IMR-90 (cell line): ENCODE measurements at regions of chr20 and their contacts with region 1.

Region 1: DNA sequence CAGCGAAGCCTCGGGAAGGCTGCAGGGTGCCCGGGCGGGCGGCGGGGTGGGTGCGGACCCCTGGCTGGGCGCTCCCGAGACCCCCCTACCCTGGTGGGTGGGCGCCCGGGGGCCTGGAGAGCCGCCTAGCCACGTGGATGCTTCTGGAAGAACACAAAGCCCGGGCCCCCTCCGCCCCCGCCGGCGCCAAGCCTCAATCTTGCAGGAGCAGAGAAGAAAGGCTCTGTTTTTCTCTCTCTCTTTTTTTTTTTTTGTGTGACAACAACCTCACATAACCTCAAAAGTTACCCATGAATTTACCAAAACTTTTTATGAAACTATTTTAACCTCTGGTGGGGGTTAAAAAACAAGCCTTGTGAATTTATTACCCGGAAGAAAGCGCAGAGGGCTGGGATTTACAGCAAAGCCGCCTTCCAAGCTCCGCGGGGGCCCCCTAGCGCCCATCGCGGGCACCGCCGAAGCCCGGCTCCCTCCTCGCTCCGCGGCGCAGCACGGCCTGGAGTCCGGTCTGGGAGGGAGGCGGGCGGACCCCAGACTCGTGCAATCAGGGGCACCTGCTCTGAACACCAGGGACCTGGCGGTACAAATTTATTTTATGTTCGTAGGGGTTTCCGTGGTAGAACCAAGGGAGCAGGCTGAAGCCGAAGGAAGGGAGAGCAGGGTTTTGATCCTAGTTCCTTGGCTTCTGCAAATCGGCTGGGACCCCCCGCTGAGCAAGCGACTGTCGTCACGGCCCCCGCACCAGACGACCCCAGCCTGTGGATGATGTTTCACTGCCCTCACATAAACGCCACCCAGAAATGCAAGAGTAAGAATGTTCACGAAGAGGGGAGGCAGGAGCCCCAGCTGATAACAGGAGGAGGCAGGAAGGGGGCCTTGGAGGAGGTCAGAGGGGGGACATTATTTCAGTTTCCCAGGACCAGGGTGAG is 58.9 kb downstream of the ZNF831 start:
- DNase-seq: peak; percentile 66
- ATAC-seq: peak; percentile 99
- H3K4me3 ChIP-seq: peak overlapping the region; percentile 33
- H3K27ac ChIP-seq: no peak overlapping the region
- H3K4me1 ChIP-seq: no peaks in the 10 kb centered on the region
- H3K27me3 ChIP-seq: peaks cover 44% of the 10 kb centered on the region
- CTCF ChIP-seq: peak; percentile 94
- POLR2A ChIP-seq: no peak
- RAD21 ChIP-seq: peak; percentile 92

Region 2: DNA sequence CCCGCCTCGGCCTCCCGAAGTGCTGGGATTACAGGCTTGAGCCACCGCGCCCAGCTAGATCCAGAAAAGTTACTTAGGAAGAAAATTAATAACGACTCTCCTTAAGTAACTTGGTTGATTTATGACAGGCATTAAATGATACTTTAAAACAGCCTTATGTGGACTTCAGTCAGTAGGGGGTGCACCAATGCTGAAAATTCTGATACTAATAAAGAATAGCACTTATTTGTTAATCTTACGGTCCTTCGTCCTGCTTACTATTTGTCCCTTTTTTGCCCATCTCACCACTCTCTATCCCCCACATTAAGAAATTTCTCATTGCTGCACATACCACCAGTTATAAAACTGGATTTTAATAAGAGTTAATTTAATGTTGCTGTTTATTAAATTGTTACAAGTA is 167.2 kb before region 1 on chr20:
- CTCF ChIA-PET with region 1: no interaction called
- POLR2A ChIA-PET with region 1: no interaction called
- dilution Hi-C with region 1: no loop called
- in situ Hi-C with region 1: no loop called
- intact Hi-C with region 1: loop called (anchors 1 kb)
- DNase-seq: peak; percentile 37
- ATAC-seq: peak; percentile 60
- H3K4me3 ChIP-seq: no peak overlapping the region
- H3K27ac ChIP-seq: no peak overlapping the region
- H3K4me1 ChIP-seq: no peaks in the 10 kb centered on the region
- H3K27me3 ChIP-seq: peaks cover 19% of the 10 kb centered on the region
- CTCF ChIP-seq: peak; percentile 52
- POLR2A ChIP-seq: no peak
- RAD21 ChIP-seq: peak; percentile 54

Region 3: DNA sequence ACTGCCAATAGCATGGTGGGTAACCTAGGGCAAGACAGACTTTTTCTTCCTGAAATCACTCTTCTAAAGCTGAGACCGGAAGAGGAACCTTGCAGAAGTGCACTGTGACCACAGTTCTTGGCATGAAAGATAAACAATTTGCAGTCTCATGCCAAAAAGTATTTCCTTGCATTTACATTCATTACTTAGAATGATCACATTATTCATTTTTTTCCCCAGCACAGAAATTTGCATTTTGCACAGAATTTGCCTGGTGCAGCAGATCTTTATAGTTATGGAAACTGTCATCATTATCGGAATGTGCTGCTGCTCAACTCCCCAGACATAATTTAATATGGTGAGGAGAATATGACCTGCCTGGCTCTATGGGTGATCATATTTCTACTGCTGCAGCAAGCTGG is 35.7 kb after region 1 on chr20:
- CTCF ChIA-PET with region 1: no interaction called
- POLR2A ChIA-PET with region 1: no interaction called
- dilution Hi-C with region 1: no loop called
- in situ Hi-C with region 1: no loop called
- intact Hi-C with region 1: no loop called
- DNase-seq: no peak
- ATAC-seq: no peak
- H3K4me3 ChIP-seq: no peak overlapping the region
- H3K27ac ChIP-seq: no peak overlapping the region
- H3K4me1 ChIP-seq: no peaks in the 10 kb centered on the region
- H3K27me3 ChIP-seq: no peaks in the 10 kb centered on the region
- CTCF ChIP-seq: no peak
- POLR2A ChIP-seq: no peak
- RAD21 ChIP-seq: no peak

Region 4: DNA sequence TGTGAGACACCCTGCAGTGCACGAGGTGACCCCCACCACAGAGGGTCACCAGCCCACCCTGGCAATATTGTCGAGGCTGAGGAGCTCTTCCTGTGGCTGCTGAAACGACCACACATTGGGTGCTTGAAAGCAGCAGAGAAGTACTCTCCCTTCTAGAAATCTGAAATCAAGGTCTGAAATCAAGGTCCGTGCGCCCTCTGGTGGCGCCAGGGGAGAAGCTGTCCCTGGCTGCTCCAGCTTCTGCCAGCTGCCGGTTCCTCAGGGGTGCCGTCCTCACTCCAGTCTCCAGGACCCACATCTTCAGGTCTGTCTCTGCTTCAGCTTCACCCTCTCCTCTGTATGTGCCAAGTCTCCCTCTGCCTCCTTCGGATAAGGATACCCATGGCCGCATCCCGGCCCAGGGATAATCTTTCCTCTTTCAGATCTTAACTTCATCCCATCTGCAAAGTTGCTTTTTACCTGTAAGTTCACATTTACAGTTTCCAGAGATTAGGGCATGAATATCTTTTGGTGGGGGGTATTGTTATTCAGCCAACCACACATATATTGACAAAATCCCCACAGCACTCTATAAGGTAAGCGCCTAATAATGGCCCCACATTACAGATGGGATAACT is 273.5 kb after region 1 on chr20:
- CTCF ChIA-PET with region 1: interaction called, 5 read pairs
- POLR2A ChIA-PET with region 1: no interaction called
- dilution Hi-C with region 1: no loop called
- in situ Hi-C with region 1: no loop called
- intact Hi-C with region 1: loop called (anchors 2 kb)
- DNase-seq: peak; percentile 53
- ATAC-seq: peak; percentile 89
- H3K4me3 ChIP-seq: no peak overlapping the region
- H3K27ac ChIP-seq: no peak overlapping the region
- H3K4me1 ChIP-seq: no peaks in the 10 kb centered on the region
- H3K27me3 ChIP-seq: no peaks in the 10 kb centered on the region
- CTCF ChIP-seq: peak; percentile 79
- POLR2A ChIP-seq: no peak
- RAD21 ChIP-seq: peak; percentile 63